PC-9 (cell line): ENCODE measurements at regions of chr9 and their contacts with region 1.

Region 1: DNA sequence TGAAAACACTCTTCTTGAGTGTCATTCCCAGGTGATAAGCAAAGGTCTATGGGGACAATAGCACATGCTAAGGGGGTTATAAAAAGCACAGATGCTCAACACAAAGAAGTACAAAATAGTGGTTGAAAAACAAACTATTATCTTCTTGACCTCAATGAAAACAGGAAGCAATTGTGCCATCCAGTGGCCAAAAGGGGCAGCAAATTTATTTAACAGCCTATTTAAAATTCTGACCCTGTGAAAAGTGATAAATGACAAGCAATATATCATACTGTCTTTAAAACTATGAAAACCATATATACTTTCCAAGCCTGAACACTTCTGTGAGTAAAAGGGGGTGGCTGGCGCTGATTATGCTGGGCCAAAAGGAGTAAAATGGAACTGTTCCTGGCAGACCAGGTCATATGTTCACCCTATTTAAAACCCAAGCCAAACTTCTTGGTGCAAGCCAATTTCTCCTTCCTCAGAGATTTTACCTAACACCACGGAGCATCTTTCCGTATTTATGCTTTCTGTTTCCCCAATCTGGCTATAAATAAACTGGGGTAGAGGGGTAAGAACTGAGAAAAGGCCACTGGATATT is 29.7 kb downstream of the TEX10 start:
- DNase-seq: peak in 1 of 2 experiments; percentile 22
- H3K4me3 ChIP-seq: no peak overlapping the region
- H3K27ac ChIP-seq: no peak overlapping the region
- H3K4me1 ChIP-seq: no peaks in the 10 kb centered on the region
- H3K27me3 ChIP-seq: no peaks in the 10 kb centered on the region
- CTCF ChIP-seq: peak; percentile 72

Region 2: GRCh38 chr9:99184475-99185347 is 1138.3 kb before region 1 on chr9:
- CTCF ChIA-PET with region 1: no interaction called
- POLR2A ChIA-PET with region 1: no interaction called
- intact Hi-C with region 1: loop called (anchors 1 kb)
- DNase-seq: peak; percentile 59 to 75
- H3K4me3 ChIP-seq: no peak overlapping the region
- H3K27ac ChIP-seq: no peak overlapping the region
- H3K4me1 ChIP-seq: no peaks in the 10 kb centered on the region
- H3K27me3 ChIP-seq: peaks cover 9% of the 10 kb centered on the region; the same call in 1 of the 2 replicates
- CTCF ChIP-seq: peak; percentile 90

Region 3: DNA sequence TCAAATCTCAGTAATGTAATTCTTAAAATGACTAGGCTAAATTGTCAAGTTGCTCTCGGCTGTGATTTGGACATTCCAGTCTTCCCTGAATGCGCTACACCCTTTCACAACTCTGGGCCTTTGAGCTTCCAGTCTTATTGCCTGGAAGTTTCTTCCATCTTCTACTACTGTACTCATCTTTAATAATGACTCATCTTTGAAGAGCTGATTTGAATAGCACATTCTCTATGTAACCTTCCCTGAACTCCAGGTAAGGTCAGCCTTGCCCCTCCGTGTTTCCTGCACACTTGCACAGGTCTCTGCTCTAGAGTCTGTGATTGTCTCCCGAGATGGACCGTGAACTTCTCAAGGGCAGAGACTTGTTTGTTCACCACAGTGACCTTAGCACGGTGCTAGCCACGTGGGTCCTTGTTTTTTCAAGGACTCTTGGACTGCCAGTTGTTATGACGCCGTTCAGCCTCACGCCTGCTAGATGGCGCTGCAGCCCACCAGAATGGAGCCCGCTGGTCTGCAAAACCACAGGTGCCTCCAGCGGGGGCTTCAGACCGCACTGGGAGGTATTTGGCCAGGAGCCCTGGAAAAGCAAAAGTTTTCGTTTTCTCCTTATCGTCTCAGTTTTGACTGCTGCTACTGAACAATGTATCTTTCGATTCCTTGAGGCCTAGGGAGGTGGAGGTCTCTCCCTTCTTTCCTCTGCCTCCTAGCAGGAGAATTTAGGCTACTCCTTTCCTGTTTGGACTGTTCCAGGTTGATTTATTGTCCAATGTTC is 1056.6 kb before region 1 on chr9:
- CTCF ChIA-PET with region 1: no interaction called
- POLR2A ChIA-PET with region 1: no interaction called
- intact Hi-C with region 1: loop called (anchors 2 kb)
- DNase-seq: peak in 1 of 2 experiments; percentile 57
- H3K4me3 ChIP-seq: no peak overlapping the region
- H3K27ac ChIP-seq: no peak overlapping the region
- H3K4me1 ChIP-seq: no peaks in the 10 kb centered on the region
- H3K27me3 ChIP-seq: no peaks in the 10 kb centered on the region
- CTCF ChIP-seq: peak; percentile 83

Region 4: GRCh38 chr9:99807276-99807852 is 515.7 kb before region 1 on chr9:
- CTCF ChIA-PET with region 1: no interaction called
- POLR2A ChIA-PET with region 1: no interaction called
- intact Hi-C with region 1: loop called (anchors 5 kb)
- DNase-seq: peak; percentile 65 to 73
- H3K4me3 ChIP-seq: no peak overlapping the region
- H3K27ac ChIP-seq: no peak overlapping the region
- H3K4me1 ChIP-seq: peaks cover 15% of the 10 kb centered on the region
- H3K27me3 ChIP-seq: no peaks in the 10 kb centered on the region
- CTCF ChIP-seq: peak; percentile 87

Region 5: GRCh38 chr9:100028201-100028784 is 294.8 kb before region 1 on chr9:
- CTCF ChIA-PET with region 1: no interaction called
- POLR2A ChIA-PET with region 1: no interaction called
- intact Hi-C with region 1: loop called (anchors 1 kb)
- DNase-seq: peak; percentile 45 to 61
- H3K4me3 ChIP-seq: no peak overlapping the region
- H3K27ac ChIP-seq: no peak overlapping the region
- H3K4me1 ChIP-seq: no peaks in the 10 kb centered on the region
- H3K27me3 ChIP-seq: no peaks in the 10 kb centered on the region
- CTCF ChIP-seq: peak; percentile 87

Region 6: DNA sequence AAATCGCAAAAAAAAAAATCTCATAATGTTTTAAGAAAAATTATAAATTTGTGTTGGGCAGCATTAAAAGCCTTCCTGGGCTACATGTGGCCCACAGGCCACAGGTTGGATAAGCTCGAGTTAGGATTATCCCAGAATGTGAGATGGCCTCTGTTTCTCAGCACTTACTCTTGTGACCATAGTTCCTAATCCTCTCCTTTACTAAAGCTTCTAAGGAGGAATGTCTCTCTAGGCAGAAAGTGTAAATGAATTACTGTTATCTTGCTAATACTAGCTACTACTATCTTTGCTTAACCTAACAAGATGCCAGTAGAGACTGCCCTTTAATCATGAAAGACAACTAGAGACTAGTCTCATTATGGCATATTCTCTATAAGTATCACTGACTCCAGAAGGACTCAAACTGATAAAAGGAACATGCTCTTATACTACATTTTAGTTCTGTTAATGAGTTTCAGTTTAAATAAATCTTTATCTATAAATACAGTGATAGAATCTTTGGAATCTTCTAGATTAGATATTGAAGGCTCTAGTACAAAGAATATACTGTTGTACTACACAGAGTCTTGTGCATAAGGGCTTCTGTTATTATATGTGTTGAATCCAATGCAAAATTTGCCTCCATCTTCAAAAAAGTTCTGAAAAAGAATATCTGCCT is 210.2 kb before region 1 on chr9:
- CTCF ChIA-PET with region 1: no interaction called
- POLR2A ChIA-PET with region 1: interaction called, 12 read pairs
- intact Hi-C with region 1: no loop called
- DNase-seq: no peak
- H3K4me3 ChIP-seq: no peak overlapping the region
- H3K27ac ChIP-seq: no peak overlapping the region
- H3K4me1 ChIP-seq: no peaks in the 10 kb centered on the region
- H3K27me3 ChIP-seq: no peaks in the 10 kb centered on the region
- CTCF ChIP-seq: no peak

Region 7: GRCh38 chr9:100437860-100438805 is 115.1 kb after region 1 on chr9:
- CTCF ChIA-PET with region 1: no interaction called
- POLR2A ChIA-PET with region 1: no interaction called
- intact Hi-C with region 1: loop called (anchors 5 kb)
- DNase-seq: peak; percentile 56 to 70
- H3K4me3 ChIP-seq: no peak overlapping the region
- H3K27ac ChIP-seq: no peak overlapping the region
- H3K4me1 ChIP-seq: no peaks in the 10 kb centered on the region
- H3K27me3 ChIP-seq: no peaks in the 10 kb centered on the region
- CTCF ChIP-seq: peak; percentile 96